CD8-positive, alpha-beta T cell (primary cell): ENCODE measurements at regions of chr1 and their contacts with region 1.

Region 1: GRCh38 chr1:7704214-7705047 is 66.7 kb upstream of the VAMP3 start:
- DNase-seq: peak; percentile 82 to 92 (median 90)
- ATAC-seq: peak; percentile 95
- H3K4me3 ChIP-seq: no peak overlapping the region
- H3K4me3 Mint-ChIP-seq: peak overlapping the region; percentile 78
- H3K27ac ChIP-seq: no peak overlapping the region
- H3K27ac Mint-ChIP-seq: no peak overlapping the region
- H3K4me1 ChIP-seq: peaks cover 4% of the 10 kb centered on the region
- H3K4me1 Mint-ChIP-seq: peaks cover 14% of the 10 kb centered on the region
- H3K27me3 ChIP-seq: peaks cover 14 to 17% of the 10 kb centered on the region in 2 experiments
- H3K27me3 Mint-ChIP-seq: peaks cover 50% of the 10 kb centered on the region
- CTCF ChIP-seq: no peak

Region 2: DNA sequence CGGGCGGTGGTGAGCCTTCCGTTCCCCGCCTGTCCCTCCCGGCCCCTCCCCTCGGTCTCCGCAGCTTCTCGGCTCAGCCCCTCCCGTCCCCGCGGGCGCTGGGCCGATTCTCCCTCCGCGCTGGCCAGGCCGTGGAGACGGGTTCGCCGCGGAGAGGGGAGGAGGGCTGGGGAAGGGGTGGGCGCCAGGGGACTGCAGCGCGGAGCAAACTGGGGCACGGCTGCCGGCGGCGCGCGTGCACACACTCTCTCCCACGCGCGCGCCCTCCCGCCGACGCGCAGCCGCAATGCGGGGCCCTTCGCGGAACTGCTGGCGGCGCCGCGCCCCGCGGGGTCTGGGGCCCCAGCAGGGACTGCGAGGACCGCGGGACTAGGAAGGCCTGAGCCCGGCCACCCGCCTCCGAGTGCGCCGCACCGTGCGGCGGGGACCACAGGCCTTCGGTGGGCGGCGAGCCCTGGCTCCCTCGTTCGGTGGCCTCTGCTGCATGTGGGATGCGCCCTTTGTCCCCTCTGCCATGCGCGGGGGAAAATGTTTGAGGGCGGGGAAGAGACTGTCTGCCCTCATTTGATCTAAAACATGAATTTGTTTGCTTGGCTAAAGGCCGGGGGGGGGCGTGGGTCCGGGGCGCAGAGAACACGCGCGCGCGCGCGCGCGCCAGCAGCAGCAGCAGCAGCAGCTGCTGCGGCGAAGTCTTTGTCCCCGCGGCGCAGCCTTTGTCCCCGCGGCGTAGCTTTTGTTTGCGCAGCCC is 24.1 kb before region 1 on chr1:
- CTCF ChIA-PET with region 1: no interaction called
- POLR2A ChIA-PET with region 1: no interaction called
- intact Hi-C with region 1: loop called (anchors 1 kb)
- DNase-seq: peak in 8 of 9 experiments; percentile 24 to 69 (median 47)
- ATAC-seq: peak; percentile 66
- H3K4me3 ChIP-seq: peak overlapping the region; percentile 45 to 80
- H3K4me3 Mint-ChIP-seq: peak overlapping the region; percentile 77
- H3K27ac ChIP-seq: peak overlapping the region in 1 of 2 experiments; percentile 47
- H3K27ac Mint-ChIP-seq: no peak overlapping the region
- H3K4me1 ChIP-seq: peaks cover 5% of the 10 kb centered on the region
- H3K4me1 Mint-ChIP-seq: no peaks in the 10 kb centered on the region
- H3K27me3 ChIP-seq: no peaks in the 10 kb centered on the region
- H3K27me3 Mint-ChIP-seq: peaks cover under 1% of the 10 kb centered on the region
- CTCF ChIP-seq: no peak

Region 3: GRCh38 chr1:7770997-7771822 is 66.8 kb after region 1 on chr1 and contains the start of gene VAMP3:
- CTCF ChIA-PET with region 1: no interaction called
- POLR2A ChIA-PET with region 1: no interaction called
- intact Hi-C with region 1: loop called in 1 of 2 experiments (anchors 1 kb)
- DNase-seq: peak; percentile 71 to 92 (median 87)
- ATAC-seq: peak; percentile 96
- H3K4me3 ChIP-seq: peak within 1 kb of the TSS; percentile 68 to 80
- H3K4me3 Mint-ChIP-seq: peak within 1 kb of the TSS; percentile 88
- H3K27ac ChIP-seq: peak within 1 kb of the TSS; percentile 60 to 74
- H3K27ac Mint-ChIP-seq: peak within 1 kb of the TSS; percentile 91
- H3K4me1 ChIP-seq: peaks cover 9% of the 10 kb centered on the region
- H3K4me1 Mint-ChIP-seq: peaks cover 42% of the 10 kb centered on the region
- H3K27me3 ChIP-seq: no peaks in the 10 kb centered on the region
- H3K27me3 Mint-ChIP-seq: peaks cover 4% of the 10 kb centered on the region
- CTCF ChIP-seq: no peak
- total RNA-seq, gene VAMP3: 76.2 to 88.1 TPM

Region 4: GRCh38 chr1:7993593-7994479 is 289.4 kb after region 1 on chr1:
- CTCF ChIA-PET with region 1: no interaction called
- POLR2A ChIA-PET with region 1: no interaction called
- intact Hi-C with region 1: no loop called
- DNase-seq: no peak
- ATAC-seq: no peak
- H3K4me3 ChIP-seq: no peak overlapping the region
- H3K4me3 Mint-ChIP-seq: no peak overlapping the region
- H3K27ac ChIP-seq: no peak overlapping the region
- H3K27ac Mint-ChIP-seq: no peak overlapping the region
- H3K4me1 ChIP-seq: no peaks in the 10 kb centered on the region
- H3K4me1 Mint-ChIP-seq: no peaks in the 10 kb centered on the region
- H3K27me3 ChIP-seq: no peaks in the 10 kb centered on the region
- H3K27me3 Mint-ChIP-seq: no peaks in the 10 kb centered on the region
- CTCF ChIP-seq: no peak